A673 (cell line): ENCODE measurements at regions of chr7 and their contacts with region 1.

Region 1: DNA sequence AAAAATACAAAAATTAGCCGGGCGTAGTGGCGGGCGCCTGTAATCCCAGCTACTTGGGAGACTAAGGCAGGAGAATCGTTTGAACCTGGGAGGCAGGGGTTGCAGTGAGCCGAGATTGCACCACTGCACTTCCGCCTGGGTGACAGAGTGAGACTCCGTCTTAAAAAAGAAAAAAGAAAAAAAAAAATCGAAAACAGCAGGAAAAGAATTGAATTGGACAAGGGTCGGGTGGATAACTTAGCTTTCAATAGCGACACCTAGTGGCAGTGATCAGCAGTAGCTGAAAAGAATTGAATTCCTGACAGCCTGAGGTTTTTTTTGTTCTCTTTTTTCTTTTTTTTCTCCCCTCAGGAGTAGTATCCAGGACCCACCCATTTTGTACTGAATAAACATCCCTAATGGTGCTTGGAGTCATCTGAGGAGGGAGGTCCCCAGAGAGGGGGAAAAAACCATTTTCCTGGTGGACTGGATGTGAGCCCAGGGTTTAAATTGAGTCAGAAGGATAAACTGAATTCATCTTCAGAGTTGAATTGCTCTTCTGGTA is 55.1 kb downstream of the CYCS start:
- DNase-seq: peak; percentile 84
- H3K4me3 ChIP-seq: peak overlapping the region; percentile 9
- H3K27ac ChIP-seq: no peak overlapping the region
- H3K4me1 ChIP-seq: peaks cover 3% of the 10 kb centered on the region
- H3K27me3 ChIP-seq: no peaks in the 10 kb centered on the region
- CTCF ChIP-seq: peak; percentile 85

Region 2: DNA sequence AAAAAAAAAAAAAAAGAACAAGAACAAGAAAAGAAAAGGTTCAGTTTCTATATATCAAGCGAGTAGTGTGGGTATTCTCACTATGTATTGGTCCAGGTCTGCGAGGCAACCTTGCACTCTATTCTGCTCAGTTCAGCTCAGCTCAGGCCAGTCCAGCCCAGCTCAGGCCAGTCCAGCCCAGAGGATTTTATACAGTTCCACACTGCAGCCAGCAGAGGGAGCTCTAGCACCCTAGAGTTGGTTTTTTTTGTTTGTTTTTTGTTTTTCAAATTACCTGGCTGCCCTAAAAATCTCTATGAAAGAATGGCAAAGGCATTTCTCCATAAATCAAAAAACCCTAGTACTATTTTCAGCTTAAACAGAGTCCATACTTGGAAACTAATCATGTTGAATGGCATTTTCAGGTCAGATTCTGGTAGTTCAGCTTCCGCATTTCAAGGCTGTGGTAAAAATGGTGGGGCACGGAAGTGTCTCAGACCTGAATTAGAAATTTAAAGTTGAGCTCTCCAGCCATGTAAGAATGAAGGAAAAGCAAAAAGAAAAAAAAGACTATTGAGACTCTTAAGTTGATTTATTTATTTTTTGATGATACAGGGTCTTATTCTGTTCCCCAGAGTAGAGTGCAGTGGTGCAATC is 257.5 kb before region 1 on chr7:
- CTCF ChIA-PET with region 1: interaction called, 36 read pairs
- POLR2A ChIA-PET with region 1: no interaction called
- intact Hi-C with region 1: loop called (anchors 2 kb)
- DNase-seq: peak; percentile 49
- H3K4me3 ChIP-seq: no peak overlapping the region
- H3K27ac ChIP-seq: no peak overlapping the region
- H3K4me1 ChIP-seq: peaks cover 15% of the 10 kb centered on the region
- H3K27me3 ChIP-seq: no peaks in the 10 kb centered on the region
- CTCF ChIP-seq: peak; percentile 93

Region 3: GRCh38 chr7:24819916-24820689 is 249.9 kb before region 1 on chr7:
- CTCF ChIA-PET with region 1: interaction called, 15 read pairs
- POLR2A ChIA-PET with region 1: interaction called, 3 read pairs
- intact Hi-C with region 1: loop called (anchors 1 kb)
- DNase-seq: peak; percentile 87
- H3K4me3 ChIP-seq: no peak overlapping the region
- H3K27ac ChIP-seq: no peak overlapping the region
- H3K4me1 ChIP-seq: peaks cover 27% of the 10 kb centered on the region
- H3K27me3 ChIP-seq: no peaks in the 10 kb centered on the region
- CTCF ChIP-seq: peak; percentile 92

Region 4: DNA sequence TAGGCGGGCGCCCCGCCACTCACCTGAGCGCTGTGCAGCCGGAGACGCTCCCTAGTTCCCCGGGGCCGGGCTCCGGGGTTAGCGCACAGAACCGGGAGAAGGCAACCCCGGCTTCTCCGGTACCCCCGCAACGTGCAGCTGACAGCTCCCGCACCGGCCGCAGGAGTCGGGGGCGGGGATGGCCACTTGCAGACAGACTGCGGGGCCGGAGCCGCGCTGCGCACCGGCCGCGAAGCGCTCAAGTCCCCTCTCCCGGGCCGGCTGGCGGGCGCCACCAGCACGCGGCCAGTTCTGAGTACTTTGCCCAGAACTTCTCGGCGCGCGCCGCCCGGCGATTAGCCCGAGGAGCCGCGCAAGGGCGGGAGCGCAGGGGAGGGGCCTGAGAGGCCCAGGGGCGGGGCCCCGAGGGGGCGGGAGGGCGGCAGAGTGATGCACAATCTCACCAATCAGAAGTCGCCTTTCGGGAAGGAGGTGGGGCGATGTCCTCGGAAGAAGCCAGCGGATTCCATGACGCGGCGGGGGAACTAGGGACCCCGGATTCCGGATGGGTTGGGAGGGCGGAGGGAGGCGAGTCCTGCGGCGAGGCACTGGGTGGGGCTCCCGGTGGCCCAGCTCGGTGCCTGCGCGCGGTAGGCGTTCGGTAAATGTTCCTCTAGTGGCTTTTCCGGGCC is 90.0 kb before region 1 on chr7 and contains the start of gene OSBPL3:
- CTCF ChIA-PET with region 1: no interaction called
- POLR2A ChIA-PET with region 1: no interaction called
- intact Hi-C with region 1: loop called (anchors 5 kb)
- DNase-seq: peak; percentile 97
- H3K4me3 ChIP-seq: peak within 1 kb of the TSS; percentile 82
- H3K27ac ChIP-seq: peak within 1 kb of the TSS; percentile 76
- H3K4me1 ChIP-seq: peaks cover 16% of the 10 kb centered on the region
- H3K27me3 ChIP-seq: no peaks in the 10 kb centered on the region
- CTCF ChIP-seq: no peak
- total RNA-seq, gene OSBPL3: 17.1 and 21.4 TPM in 2 replicates

Region 5: GRCh38 chr7:25012254-25012653 is 57.7 kb before region 1 on chr7:
- CTCF ChIA-PET with region 1: interaction called, 3 read pairs
- POLR2A ChIA-PET with region 1: interaction called, 10 read pairs
- intact Hi-C with region 1: no loop called
- DNase-seq: no peak
- H3K4me3 ChIP-seq: no peak overlapping the region
- H3K27ac ChIP-seq: no peak overlapping the region
- H3K4me1 ChIP-seq: no peaks in the 10 kb centered on the region
- H3K27me3 ChIP-seq: no peaks in the 10 kb centered on the region
- CTCF ChIP-seq: no peak